ENCODE measurements at regions of chr6 and their contacts with region 1.

Region 1: DNA sequence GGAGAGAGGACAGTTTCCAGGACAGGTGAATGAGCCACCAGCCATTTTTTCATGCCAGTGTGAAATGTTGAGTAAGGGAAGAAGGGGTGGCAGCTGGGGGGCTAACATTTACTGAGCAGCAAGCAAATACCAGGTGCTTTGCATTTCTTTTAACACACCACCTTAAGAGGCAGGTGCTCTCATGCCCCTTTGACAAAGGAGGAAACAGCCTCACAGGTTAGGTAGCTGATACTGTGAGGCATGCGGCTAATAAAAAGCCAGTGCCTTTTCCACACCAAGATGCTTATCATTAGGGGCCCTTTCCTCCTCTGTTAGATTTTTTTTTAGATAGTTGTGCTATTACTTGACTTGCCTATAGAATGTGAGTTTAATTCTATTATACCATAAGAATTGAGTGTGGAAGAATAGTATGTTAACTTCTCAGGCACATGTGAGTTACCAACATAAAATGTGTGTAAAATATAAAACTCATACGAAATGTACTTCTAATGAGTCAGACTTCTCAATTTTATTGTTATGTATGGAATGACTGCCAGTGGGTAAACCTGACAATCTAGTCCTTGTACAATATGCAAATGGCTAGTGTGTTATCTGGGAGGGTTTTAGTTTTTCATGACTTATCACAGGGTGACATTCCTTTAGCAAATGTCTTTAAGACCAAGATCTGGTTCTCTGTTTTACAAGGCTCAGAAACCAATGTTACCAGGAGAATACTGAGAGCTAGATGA is 260.0 kb downstream of the TMEM242 start:
- DNase-seq: no peak
- H3K4me3 Mint-ChIP-seq: no peak overlapping the region
- H3K27ac Mint-ChIP-seq: no peak overlapping the region
- H3K4me1 Mint-ChIP-seq: peaks cover 9% of the 10 kb centered on the region
- H3K27me3 Mint-ChIP-seq: no peaks in the 10 kb centered on the region
- CTCF ChIP-seq: no peak

Region 2: GRCh38 chr6:156828280-156828703 is 235.0 kb before region 1 on chr6:
- CTCF ChIA-PET with region 1: no interaction called
- intact Hi-C with region 1: no loop called
- DNase-seq: no peak
- H3K4me3 Mint-ChIP-seq: no peak overlapping the region
- H3K27ac Mint-ChIP-seq: no peak overlapping the region
- H3K4me1 Mint-ChIP-seq: peaks cover 22% of the 10 kb centered on the region
- H3K27me3 Mint-ChIP-seq: no peaks in the 10 kb centered on the region
- CTCF ChIP-seq: no peak

Region 3: GRCh38 chr6:157045831-157046454 is 17.4 kb before region 1 on chr6:
- CTCF ChIA-PET with region 1: interaction called, 10 read pairs
- intact Hi-C with region 1: no loop called
- DNase-seq: peak; percentile 8
- H3K4me3 Mint-ChIP-seq: no peak overlapping the region
- H3K27ac Mint-ChIP-seq: no peak overlapping the region
- H3K4me1 Mint-ChIP-seq: no peaks in the 10 kb centered on the region
- H3K27me3 Mint-ChIP-seq: no peaks in the 10 kb centered on the region
- CTCF ChIP-seq: peak; percentile 30

Region 4: DNA sequence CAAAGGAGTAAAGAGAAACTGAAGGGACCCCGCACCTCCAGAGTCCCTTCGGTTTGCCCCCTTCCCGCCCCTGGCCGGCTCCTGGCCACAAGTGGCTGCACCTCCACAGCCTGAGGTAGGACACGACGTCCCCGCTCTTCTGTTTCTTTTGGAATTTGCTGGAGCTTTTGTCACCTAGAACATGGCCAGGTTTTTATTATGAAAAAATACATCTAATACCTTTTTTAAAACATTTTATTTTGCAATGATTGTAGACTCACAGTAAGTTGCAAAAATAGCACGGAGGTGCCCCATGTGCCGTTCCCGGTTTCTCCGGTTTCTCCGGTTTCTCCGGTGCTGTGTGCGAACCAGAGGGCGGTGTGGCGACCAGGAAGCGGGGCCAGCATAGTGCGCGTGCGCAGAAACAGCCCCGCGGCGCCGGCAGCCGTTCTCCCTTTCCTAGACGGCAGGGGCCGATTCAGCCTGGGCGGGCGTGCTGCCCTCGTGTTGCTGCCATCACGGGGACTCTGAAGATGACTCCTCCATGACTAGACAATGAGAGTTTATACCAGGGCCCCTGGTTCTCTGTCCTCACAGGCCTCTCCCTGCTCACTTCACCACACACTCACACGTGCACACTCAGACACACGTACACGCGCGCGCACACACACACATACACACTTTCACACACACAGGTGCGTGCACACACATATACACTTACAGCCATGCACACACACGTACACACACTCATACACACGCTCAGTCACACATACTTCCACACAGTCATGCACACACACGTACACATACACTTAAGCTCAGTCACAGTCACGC is 157.9 kb after region 1 on chr6:
- CTCF ChIA-PET with region 1: no interaction called
- intact Hi-C with region 1: no loop called
- DNase-seq: peak; percentile 93
- H3K4me3 Mint-ChIP-seq: peak overlapping the region; percentile 57
- H3K27ac Mint-ChIP-seq: peak overlapping the region; percentile 61
- H3K4me1 Mint-ChIP-seq: peaks cover 18% of the 10 kb centered on the region
- H3K27me3 Mint-ChIP-seq: no peaks in the 10 kb centered on the region
- CTCF ChIP-seq: no peak

Measured in Calu3 (cell line).